Activated CD4-positive, alpha-beta T cell treated with anti-CD3 and anti-CD28 coated beads for 36 hours (primary cell): ENCODE measurements at regions of chr17 and their contacts with region 1.

Region 1: DNA sequence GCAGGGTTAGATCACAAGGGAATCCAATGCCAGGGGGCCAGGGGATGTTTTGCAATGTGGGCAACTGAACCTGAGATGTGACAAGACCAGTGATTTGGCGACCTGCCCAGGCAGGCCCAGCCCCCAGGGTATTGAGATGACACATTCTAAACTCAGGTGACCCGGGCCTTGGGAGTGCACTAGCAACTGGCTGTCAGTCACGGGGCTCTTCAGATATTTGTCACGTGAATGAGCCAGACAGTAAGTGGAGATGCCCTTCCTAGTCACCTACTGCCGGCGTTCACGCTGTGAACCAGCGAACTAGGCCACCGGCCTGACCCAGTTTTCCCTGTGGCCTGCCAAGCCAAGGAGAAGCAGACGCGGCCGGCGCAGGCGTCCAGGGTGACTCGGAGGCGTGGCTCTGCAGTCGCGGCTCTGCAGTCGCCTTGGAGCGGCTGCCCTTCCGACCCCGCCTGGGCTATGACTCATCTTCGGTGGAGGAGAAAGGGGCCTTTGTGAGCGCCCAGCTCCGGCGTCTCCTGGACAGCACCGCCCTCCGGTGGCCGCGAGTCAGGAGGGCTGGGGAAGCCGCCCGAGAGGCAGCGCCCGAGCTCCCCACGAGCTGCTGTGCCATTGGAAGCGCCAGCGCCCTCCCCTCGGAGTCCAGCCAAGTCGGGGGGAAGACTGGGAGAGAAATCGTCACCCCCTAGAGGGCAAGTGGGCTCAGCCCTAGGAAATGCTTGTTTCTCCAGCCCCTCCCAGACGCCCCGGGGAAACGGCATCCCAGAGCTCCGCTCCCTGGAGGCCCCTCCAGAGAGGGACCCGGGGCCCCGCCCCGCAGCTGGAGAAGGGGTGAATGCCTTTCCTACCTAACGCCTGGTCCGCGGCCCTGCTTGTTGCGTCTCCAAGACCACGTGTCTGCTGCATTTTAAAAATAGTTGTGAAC is 38.8 kb downstream of the WSB1 start:
- DNase-seq: peak; percentile 96
- ATAC-seq: peak; percentile 90
- H3K4me3 Mint-ChIP-seq: peak overlapping the region; percentile 79
- H3K27ac Mint-ChIP-seq: peak overlapping the region; percentile 93
- H3K4me1 Mint-ChIP-seq: peaks cover 18% of the 10 kb centered on the region
- H3K27me3 Mint-ChIP-seq: no peaks in the 10 kb centered on the region

Region 2: DNA sequence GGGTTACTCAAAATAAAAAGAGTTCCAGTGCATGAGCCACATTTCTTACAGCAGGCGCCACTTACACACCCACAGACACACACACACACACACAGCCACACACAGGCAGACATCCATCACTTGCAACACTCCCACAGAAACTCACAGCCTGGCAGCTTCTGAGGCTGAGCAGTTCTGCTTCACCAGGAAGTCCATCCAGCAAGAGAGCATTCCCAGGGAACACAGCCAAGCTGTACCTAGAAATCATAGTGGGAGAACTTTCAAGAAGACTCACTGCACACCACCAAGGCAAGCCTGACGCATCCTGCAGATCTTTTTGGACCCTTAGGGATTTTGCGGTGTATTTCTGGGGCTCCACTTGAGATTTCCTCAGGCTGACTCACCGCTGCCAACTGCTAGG is 179.7 kb before region 1 on chr17:
- CTCF ChIA-PET with region 1: no interaction called
- POLR2A ChIA-PET with region 1: no interaction called
- intact Hi-C with region 1: no loop called
- DNase-seq: no peak
- ATAC-seq: no peak
- H3K4me3 Mint-ChIP-seq: no peak overlapping the region
- H3K27ac Mint-ChIP-seq: no peak overlapping the region
- H3K4me1 Mint-ChIP-seq: no peaks in the 10 kb centered on the region
- H3K27me3 Mint-ChIP-seq: no peaks in the 10 kb centered on the region

Region 3: DNA sequence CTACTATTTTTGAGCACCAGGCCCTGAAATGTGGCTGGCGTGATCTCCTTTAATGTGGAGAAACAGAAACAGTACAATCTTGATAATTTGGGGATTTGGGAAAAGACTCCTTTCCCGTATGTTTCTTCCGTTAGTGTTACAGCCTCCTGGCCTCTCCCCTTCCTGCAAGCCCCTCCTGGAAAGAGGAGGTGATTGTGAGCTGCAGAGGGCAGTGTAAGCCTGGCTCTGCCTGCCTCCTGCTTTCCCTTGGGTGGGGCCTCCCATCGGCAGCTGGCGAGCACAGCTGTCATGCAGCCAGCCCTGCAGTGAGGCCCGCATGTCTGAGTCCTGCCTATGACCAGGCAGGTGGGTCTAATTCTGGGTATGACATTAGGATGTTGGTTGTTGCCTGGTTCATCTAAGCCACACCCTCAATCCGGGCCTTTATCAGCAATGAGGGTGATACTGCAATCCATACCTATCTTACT is 87.5 kb before region 1 on chr17:
- CTCF ChIA-PET with region 1: interaction called, 13 read pairs
- POLR2A ChIA-PET with region 1: interaction called, 4 read pairs
- intact Hi-C with region 1: loop called in 1 of 2 experiments (anchors 1 kb)
- DNase-seq: peak; percentile 78
- ATAC-seq: peak; percentile 96
- H3K4me3 Mint-ChIP-seq: no peak overlapping the region
- H3K27ac Mint-ChIP-seq: no peak overlapping the region
- H3K4me1 Mint-ChIP-seq: peaks cover 14% of the 10 kb centered on the region
- H3K27me3 Mint-ChIP-seq: peaks cover 12% of the 10 kb centered on the region

Region 4: GRCh38 chr17:27343991-27344607 is 11.4 kb after region 1 on chr17:
- CTCF ChIA-PET with region 1: interaction called, 11 read pairs
- POLR2A ChIA-PET with region 1: interaction called, 3 read pairs
- intact Hi-C with region 1: loop called in 1 of 2 experiments (anchors 1 kb)
- DNase-seq: no peak
- ATAC-seq: no peak
- H3K4me3 Mint-ChIP-seq: no peak overlapping the region
- H3K27ac Mint-ChIP-seq: no peak overlapping the region
- H3K4me1 Mint-ChIP-seq: peaks cover 14% of the 10 kb centered on the region
- H3K27me3 Mint-ChIP-seq: peaks cover 2% of the 10 kb centered on the region

Region 5: GRCh38 chr17:27381007-27381501 is 48.3 kb after region 1 on chr17:
- CTCF ChIA-PET with region 1: interaction called, 10 read pairs
- POLR2A ChIA-PET with region 1: no interaction called
- intact Hi-C with region 1: loop called in 1 of 2 experiments (anchors 1 kb)
- DNase-seq: peak; percentile 94
- ATAC-seq: peak; percentile 96
- H3K4me3 Mint-ChIP-seq: no peak overlapping the region
- H3K27ac Mint-ChIP-seq: no peak overlapping the region
- H3K4me1 Mint-ChIP-seq: peaks cover 2% of the 10 kb centered on the region
- H3K27me3 Mint-ChIP-seq: peaks cover 23% of the 10 kb centered on the region

Region 6: DNA sequence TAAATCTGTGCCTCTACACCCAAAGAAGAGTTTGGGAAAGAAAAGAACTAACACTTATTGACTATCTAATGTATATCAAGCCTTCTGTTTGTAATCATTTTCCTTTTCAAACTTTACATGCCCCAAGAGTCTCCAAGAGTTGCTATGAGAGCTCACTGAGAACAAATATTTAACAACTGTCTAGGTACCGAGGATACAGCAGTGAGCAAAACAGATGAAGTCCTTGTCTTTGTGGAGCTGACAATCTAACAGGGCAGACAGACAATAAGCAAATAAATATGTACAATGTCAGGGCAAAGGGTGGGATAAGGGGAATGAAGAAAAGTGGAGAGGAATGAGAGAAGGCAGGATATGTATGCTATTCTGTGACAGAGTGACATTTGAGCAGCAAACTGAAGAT is 58.7 kb after region 1 on chr17:
- CTCF ChIA-PET with region 1: no interaction called
- POLR2A ChIA-PET with region 1: no interaction called
- intact Hi-C with region 1: no loop called
- DNase-seq: no peak
- ATAC-seq: no peak
- H3K4me3 Mint-ChIP-seq: no peak overlapping the region
- H3K27ac Mint-ChIP-seq: no peak overlapping the region
- H3K4me1 Mint-ChIP-seq: peaks cover 10% of the 10 kb centered on the region
- H3K27me3 Mint-ChIP-seq: peaks cover 20% of the 10 kb centered on the region

Region 7: DNA sequence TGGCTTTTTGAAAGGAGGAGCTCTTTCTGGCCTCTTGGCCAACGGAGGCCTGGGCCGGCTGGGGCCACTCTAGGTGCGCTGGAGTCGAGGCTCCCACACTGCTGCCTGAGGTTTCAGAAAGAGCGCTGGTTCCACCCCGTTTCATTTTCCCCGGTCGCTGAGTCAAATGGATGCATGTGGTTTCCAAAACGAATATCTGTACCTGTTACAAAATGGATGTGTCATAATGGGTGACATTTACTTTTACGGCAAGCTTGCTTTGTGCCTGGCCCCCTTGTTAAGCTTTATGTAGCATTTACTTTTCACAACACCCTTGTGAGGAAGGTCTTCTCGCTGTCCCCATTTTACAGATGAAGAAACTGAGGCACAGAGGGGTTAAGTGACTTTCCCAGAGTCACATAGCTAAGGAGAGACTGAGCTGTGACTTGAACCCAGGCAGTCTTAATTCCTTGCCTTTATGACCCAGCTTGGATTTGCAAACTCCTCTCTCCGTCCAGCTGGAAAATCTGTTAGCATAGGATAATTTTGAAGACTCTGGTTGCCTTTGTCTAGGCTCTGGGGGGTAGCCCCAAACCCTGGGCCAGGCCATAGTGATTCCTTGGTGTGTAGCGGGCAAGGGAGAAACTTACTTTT is 134.1 kb after region 1 on chr17:
- CTCF ChIA-PET with region 1: no interaction called
- POLR2A ChIA-PET with region 1: no interaction called
- intact Hi-C with region 1: loop called in 1 of 2 experiments (anchors 2 kb)
- DNase-seq: peak; percentile 91
- ATAC-seq: peak; percentile 84
- H3K4me3 Mint-ChIP-seq: peak overlapping the region; percentile 71
- H3K27ac Mint-ChIP-seq: peak overlapping the region; percentile 96
- H3K4me1 Mint-ChIP-seq: peaks cover 93% of the 10 kb centered on the region
- H3K27me3 Mint-ChIP-seq: no peaks in the 10 kb centered on the region